ENCODE measurements at regions of chr6 and their contacts with region 1.

Region 1: GRCh38 chr6:41455818-41456217 is 90.4 kb upstream of the FOXP4 start:
- H3K4me3 ChIP-seq: no peak overlapping the region
- H3K27ac ChIP-seq: peak overlapping the region; percentile 79
- H3K4me1 ChIP-seq: peaks cover 25% of the 10 kb centered on the region
- CTCF ChIP-seq: no peak

Region 2: DNA sequence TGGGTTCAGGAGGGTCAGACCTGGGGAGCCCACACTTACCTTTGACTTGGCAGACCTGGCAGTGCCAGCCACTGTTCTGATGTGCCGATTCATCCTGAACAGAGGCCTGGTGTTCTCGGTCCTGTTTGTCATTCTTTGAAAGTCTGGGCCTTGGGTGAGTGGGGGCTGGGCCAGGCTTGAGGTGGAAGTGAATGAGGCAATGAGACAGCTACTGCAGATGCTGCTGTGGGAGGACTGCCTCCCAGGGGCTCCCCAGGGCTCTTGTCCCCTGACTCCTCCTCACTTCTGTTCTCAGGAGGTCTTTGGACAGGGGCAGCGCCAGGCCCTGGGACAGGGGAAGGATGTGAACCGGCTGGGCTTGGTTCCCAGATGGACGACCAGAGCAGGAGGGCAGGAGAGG is 233.3 kb before region 1 on chr6:
- CTCF ChIA-PET with region 1: no interaction called
- POLR2A ChIA-PET with region 1: no interaction called
- H3K4me3 ChIP-seq: no peak overlapping the region
- H3K27ac ChIP-seq: no peak overlapping the region
- H3K4me1 ChIP-seq: peaks cover 5% of the 10 kb centered on the region; the same call in 1 of the 2 replicates
- CTCF ChIP-seq: no peak

Region 3: GRCh38 chr6:41442800-41443501 is 12.9 kb before region 1 on chr6:
- CTCF ChIA-PET with region 1: interaction called, 13 read pairs
- POLR2A ChIA-PET with region 1: interaction called, 3 read pairs
- H3K4me3 ChIP-seq: no peak overlapping the region
- H3K27ac ChIP-seq: peak overlapping the region; percentile 68
- H3K4me1 ChIP-seq: peaks cover 22% of the 10 kb centered on the region
- CTCF ChIP-seq: peak; percentile 80

Region 4: DNA sequence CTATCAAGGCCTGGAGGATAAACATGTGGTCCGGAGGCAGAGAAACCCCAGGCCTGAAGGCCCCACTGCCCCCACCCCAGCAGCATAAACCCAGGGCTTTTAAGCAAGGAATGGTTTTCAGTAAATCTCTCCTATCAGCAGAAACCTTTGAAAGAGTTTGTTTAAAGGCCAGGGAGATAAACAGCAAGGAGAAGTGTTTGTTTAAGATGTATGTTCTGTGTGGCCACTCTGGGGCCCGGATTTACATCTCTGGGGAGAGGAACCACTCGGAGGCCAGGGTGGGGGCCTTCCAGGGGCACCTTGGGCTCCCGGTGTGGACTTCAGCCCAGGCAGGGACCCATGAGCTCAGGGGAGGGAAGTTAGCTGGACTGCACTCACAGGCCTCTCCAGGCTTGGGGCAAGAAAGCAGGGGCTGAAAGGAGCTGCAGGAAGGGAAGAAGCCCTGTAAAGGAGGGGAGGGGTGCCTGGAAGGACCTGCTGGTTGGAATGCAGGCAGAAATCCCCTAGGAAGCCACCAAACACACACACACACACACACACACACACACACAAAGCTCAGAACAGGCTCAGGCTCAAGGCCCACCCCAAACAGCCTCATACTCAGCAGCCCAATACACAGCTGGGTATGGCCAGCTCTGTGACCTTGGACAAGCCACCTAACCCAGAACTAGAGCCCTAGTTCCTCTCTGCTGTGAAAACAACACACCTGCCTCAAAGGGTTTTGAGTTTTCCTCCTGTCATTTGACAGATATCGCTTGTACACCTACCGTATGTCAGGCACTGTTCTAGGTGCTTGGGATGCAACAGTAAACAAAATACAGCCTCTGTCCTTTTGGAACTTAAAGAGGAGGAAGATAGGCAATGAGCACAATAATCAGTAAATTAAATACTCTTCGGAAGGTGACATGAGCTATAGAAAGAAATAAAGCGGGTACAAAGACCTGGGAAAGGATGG is 64.2 kb after region 1 on chr6:
- CTCF ChIA-PET with region 1: no interaction called
- POLR2A ChIA-PET with region 1: no interaction called
- H3K4me3 ChIP-seq: no peak overlapping the region
- H3K27ac ChIP-seq: peak overlapping the region; percentile 67
- H3K4me1 ChIP-seq: peaks cover 11% of the 10 kb centered on the region; the same call in 1 of the 2 replicates
- CTCF ChIP-seq: no peak

Region 5: GRCh38 chr6:41887331-41887751 is 431.5 kb after region 1 on chr6:
- CTCF ChIA-PET with region 1: no interaction called
- POLR2A ChIA-PET with region 1: no interaction called
- H3K4me3 ChIP-seq: no peak overlapping the region
- H3K27ac ChIP-seq: no peak overlapping the region
- H3K4me1 ChIP-seq: no peaks in the 10 kb centered on the region
- CTCF ChIP-seq: no peak